ENCODE measurements at regions of chrX and their contacts with region 1.

Region 1: DNA sequence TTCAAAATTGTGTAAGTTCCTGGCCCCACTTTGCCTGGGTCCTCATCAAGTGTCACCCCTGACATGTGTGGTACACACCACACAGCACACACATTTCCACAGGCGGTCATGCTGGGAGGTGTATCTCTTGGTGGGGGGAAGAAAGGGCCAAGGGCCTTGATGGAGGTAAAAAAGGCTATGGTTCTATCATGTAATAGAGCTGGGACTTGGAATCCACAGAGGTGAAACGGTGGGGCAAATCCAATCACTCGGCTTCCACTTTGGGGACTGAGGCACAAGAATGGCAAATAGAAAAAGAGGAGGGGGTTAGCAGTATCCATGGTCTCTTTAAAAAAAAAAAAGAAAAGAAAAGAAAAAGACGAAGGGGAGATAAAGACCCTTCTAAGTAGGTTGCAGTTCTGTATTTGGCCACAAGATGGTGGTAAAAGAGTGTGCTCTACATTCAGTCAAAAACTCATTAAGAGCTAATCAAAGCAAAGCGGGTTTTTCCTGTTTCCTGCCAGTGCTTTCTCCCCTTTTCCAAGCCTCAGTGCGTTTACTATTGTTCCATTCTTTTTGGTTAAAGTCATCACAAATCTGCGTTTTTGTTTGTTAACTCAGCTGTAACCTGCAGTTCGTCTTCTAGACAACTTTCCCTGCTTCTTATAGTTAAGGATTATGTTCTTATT is 37.0 kb upstream of the ATP6AP2 start:
- DNase-seq: peak; percentile 82
- ATAC-seq: peak; percentile 42; the same call in 1 of the 2 replicates
- H3K4me3 ChIP-seq: no peak overlapping the region; the same call in 1 of the 2 replicates
- H3K27ac ChIP-seq: no peak overlapping the region
- H3K4me1 ChIP-seq: peaks cover 9% of the 10 kb centered on the region; the same call in 1 of the 2 replicates
- H3K27me3 ChIP-seq: peaks cover 6% of the 10 kb centered on the region; the same call in 1 of the 2 replicates
- CTCF ChIP-seq: peak; percentile 81

Region 2: GRCh38 chrX:40632199-40632598 is 88.4 kb after region 1 on chrX:
- CTCF ChIA-PET with region 1: no interaction called
- POLR2A ChIA-PET with region 1: no interaction called
- intact Hi-C with region 1: no loop called
- DNase-seq: no peak
- ATAC-seq: no peak
- H3K4me3 ChIP-seq: no peak overlapping the region
- H3K27ac ChIP-seq: no peak overlapping the region
- H3K4me1 ChIP-seq: no peaks in the 10 kb centered on the region
- H3K27me3 ChIP-seq: no peaks in the 10 kb centered on the region
- CTCF ChIP-seq: no peak

Region 3: GRCh38 chrX:40644821-40645358 is 101.1 kb after region 1 on chrX:
- CTCF ChIA-PET with region 1: interaction called, 4 read pairs
- POLR2A ChIA-PET with region 1: no interaction called
- intact Hi-C with region 1: loop called (anchors 2 kb)
- DNase-seq: peak; percentile 72
- ATAC-seq: peak; percentile 54
- H3K4me3 ChIP-seq: peak overlapping the region; percentile 67
- H3K27ac ChIP-seq: peak overlapping the region; percentile 84
- H3K4me1 ChIP-seq: peaks cover 18% of the 10 kb centered on the region
- H3K27me3 ChIP-seq: no peaks in the 10 kb centered on the region
- CTCF ChIP-seq: no peak

Measured in PC-3 (cell line).